ENCODE measurements at regions of chr2 and their contacts with region 1.

Region 1: GRCh38 chr2:170505631-170506275 is 209.4 kb upstream of the SP5 start:
- DNase-seq: no peak
- H3K4me3 Mint-ChIP-seq: no peak overlapping the region
- H3K27ac Mint-ChIP-seq: peak overlapping the region; percentile 73
- H3K4me1 Mint-ChIP-seq: peaks cover 54% of the 10 kb centered on the region
- H3K27me3 Mint-ChIP-seq: no peaks in the 10 kb centered on the region

Region 2: DNA sequence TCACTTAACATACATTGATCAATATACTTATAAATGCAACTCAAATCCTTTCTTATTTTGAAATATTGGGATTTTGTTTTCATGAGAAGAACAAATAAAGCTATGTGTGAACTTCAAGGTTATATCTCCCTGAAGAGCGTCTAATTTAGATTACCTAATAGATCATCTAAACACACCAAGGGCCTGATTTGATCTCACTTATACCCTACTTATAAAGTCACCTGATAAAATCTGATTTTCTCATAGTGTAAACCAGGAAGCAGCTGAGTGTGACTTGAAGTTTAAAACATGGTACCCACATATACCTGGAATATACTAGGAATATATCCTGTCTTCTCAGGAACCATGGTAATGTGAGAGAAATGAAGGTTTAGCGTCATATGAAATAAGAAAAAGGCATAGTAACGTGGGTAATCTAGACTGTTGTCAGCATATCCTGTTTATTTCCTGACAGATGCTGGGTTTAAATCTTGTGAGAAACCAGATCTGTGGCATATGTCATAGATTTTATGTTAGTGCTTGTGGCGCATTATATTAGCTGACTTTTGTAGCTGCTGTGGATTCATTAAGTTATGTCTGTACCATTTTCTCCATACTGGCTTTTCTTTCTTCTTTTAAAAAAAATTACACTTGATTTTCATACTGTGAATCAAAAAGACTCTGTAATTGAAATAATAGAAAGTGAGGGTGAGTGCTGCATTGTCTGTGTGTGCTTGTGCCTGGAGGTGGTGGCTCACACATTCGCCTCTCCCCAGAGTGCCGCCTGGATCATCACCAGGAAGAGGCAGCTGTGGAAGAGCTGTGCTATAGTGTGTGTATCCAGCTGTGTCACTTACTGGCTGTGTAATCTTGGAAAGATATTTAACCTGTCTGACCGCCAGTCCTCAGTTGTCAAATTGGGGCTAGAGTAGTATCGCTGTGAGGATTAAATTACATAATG is 163.8 kb before region 1 on chr2:
- intact Hi-C with region 1: loop called (anchors 5 kb)
- DNase-seq: no peak
- H3K4me3 Mint-ChIP-seq: no peak overlapping the region
- H3K27ac Mint-ChIP-seq: peak overlapping the region; percentile 84
- H3K4me1 Mint-ChIP-seq: peaks cover 47% of the 10 kb centered on the region
- H3K27me3 Mint-ChIP-seq: no peaks in the 10 kb centered on the region

Region 3: GRCh38 chr2:170369894-170370293 is 135.9 kb before region 1 on chr2:
- intact Hi-C with region 1: loop called (anchors 1 kb)
- DNase-seq: no peak
- H3K4me3 Mint-ChIP-seq: peak overlapping the region; percentile 71
- H3K27ac Mint-ChIP-seq: peak overlapping the region; percentile 86
- H3K4me1 Mint-ChIP-seq: peaks cover 86% of the 10 kb centered on the region
- H3K27me3 Mint-ChIP-seq: no peaks in the 10 kb centered on the region

Region 4: DNA sequence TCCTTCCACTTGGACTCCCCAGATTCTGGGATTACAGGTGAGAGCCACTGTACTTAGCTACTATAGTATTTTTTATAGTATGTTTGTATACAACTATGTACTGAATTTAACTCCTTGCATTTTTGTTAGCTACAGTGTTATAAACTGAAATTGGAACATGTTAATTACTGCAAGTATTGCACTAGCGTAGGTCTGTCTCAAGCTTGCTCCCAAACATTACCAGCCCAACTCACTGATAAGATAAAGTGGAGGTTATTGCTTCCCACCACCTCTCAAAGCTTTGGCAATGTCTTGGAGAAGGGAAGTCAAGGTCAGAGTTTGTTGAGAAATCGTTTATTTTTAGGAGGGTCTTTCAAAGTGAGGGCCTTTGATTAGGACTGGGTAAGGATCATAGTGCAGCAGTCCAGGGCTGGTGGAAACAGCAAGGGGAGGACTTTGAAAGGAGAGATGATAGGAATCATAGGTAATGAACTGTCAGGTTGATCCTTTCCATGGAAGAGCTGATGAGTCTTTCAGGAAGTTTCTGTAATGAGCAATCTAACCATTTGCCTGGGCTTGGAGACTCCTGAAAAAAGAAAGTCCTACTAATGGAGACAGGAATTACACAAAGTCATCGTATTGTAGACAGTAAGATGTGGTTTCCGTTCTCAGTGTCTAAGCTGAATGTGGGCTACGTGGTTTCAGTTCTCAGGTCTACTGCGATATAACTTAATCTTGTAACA is 70.7 kb before region 1 on chr2:
- intact Hi-C with region 1: loop called (anchors 5 kb)
- DNase-seq: no peak
- H3K4me3 Mint-ChIP-seq: no peak overlapping the region
- H3K27ac Mint-ChIP-seq: no peak overlapping the region
- H3K4me1 Mint-ChIP-seq: peaks cover 24% of the 10 kb centered on the region
- H3K27me3 Mint-ChIP-seq: peaks cover 16% of the 10 kb centered on the region

Region 5: GRCh38 chr2:170446082-170446481 is 59.7 kb before region 1 on chr2:
- intact Hi-C with region 1: no loop called
- DNase-seq: no peak
- H3K4me3 Mint-ChIP-seq: no peak overlapping the region
- H3K27ac Mint-ChIP-seq: no peak overlapping the region
- H3K4me1 Mint-ChIP-seq: no peaks in the 10 kb centered on the region
- H3K27me3 Mint-ChIP-seq: no peaks in the 10 kb centered on the region

Region 6: DNA sequence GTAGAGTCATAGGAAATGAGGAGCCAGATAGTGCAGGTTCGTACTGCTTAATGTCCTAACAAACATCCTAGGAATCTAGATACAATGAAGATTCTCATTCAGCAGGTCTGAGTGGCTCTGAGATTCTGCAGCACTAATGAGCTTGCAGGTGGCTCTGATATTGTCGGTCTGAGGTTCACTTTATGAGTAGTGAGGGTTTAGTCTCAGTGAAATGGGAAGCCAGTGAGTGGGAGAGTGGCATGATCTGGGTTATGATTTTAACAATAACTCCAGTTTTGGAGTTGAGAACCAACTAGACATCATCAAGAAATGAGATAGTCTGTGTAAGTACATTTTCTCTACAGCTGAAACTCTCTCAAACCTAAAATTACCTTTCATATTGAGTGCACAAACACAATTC is 42.6 kb after region 1 on chr2:
- intact Hi-C with region 1: loop called (anchors 2 kb)
- DNase-seq: no peak
- H3K4me3 Mint-ChIP-seq: no peak overlapping the region
- H3K27ac Mint-ChIP-seq: no peak overlapping the region
- H3K4me1 Mint-ChIP-seq: peaks cover 5% of the 10 kb centered on the region
- H3K27me3 Mint-ChIP-seq: peaks cover 3% of the 10 kb centered on the region

Measured in activated T-helper 2 cell treated with anti-CD3 and anti-CD28 coated beads, Interferon-gamma antibody, Interleukin-2, Interleukin-4, amounts not matched to agents 10 μg/mL and 5 μg/mL and 100 μg/mL, durations not matched to agents 14 hours and 24 hours and 36 hours (primary cell).